Adrenal gland (tissue), 19 donors: ENCODE measurements at regions of chr7 and their contacts with region 1.

Region 1: GRCh38 chr7:17706734-17707133 is 233.6 kb downstream of the SNX13 start:
- DNase-seq: peak; percentile 34 to 72 (median 54)
- H3K4me3 ChIP-seq: no peak overlapping the region
- H3K27ac ChIP-seq: no peak overlapping the region
- H3K4me1 ChIP-seq: no peaks in the 10 kb centered on the region
- H3K27me3 ChIP-seq: no peaks in the 10 kb centered on the region
- CTCF ChIP-seq: peak; percentile 31 to 70 (median 56)
- POLR2A ChIP-seq: no peak

Region 2: GRCh38 chr7:17195576-17195975 is 511.2 kb before region 1 on chr7:
- intact Hi-C with region 1: no loop called
- DNase-seq: no peak
- H3K4me3 ChIP-seq: no peak overlapping the region
- H3K27ac ChIP-seq: no peak overlapping the region
- H3K4me1 ChIP-seq: no peaks in the 10 kb centered on the region
- H3K27me3 ChIP-seq: no peaks in the 10 kb centered on the region
- CTCF ChIP-seq: no peak
- POLR2A ChIP-seq: no peak

Region 3: GRCh38 chr7:17205910-17206905 is 500.5 kb before region 1 on chr7:
- intact Hi-C with region 1: no loop called
- DNase-seq: no peak
- H3K4me3 ChIP-seq: no peak overlapping the region
- H3K27ac ChIP-seq: no peak overlapping the region
- H3K4me1 ChIP-seq: no peaks in the 10 kb centered on the region
- H3K27me3 ChIP-seq: no peaks in the 10 kb centered on the region
- CTCF ChIP-seq: no peak
- POLR2A ChIP-seq: no peak

Region 4: GRCh38 chr7:17663061-17663675 is 43.6 kb before region 1 on chr7:
- intact Hi-C with region 1: no loop called
- DNase-seq: peak in 2 of 7 donors; percentile 21 to 32
- H3K4me3 ChIP-seq: no peak overlapping the region
- H3K27ac ChIP-seq: peak overlapping the region in 1 of 5 donors; percentile 24
- H3K4me1 ChIP-seq: peaks cover 0 to 4% of the 10 kb centered on the region in 2 donors
- H3K27me3 ChIP-seq: no peaks in the 10 kb centered on the region
- CTCF ChIP-seq: no peak
- POLR2A ChIP-seq: no peak

Region 5: GRCh38 chr7:18320971-18321567 is 614.3 kb after region 1 on chr7:
- intact Hi-C with region 1: loop called in 1 of 2 experiments (anchors 10 kb)
- DNase-seq: no peak
- H3K4me3 ChIP-seq: no peak overlapping the region
- H3K27ac ChIP-seq: no peak overlapping the region
- H3K4me1 ChIP-seq: no peaks in the 10 kb centered on the region
- H3K27me3 ChIP-seq: no peaks in the 10 kb centered on the region
- CTCF ChIP-seq: peak; percentile 34 to 66 (median 44)
- POLR2A ChIP-seq: no peak